ENCODE measurements at regions of chr5 and their contacts with region 1.

Region 1: DNA sequence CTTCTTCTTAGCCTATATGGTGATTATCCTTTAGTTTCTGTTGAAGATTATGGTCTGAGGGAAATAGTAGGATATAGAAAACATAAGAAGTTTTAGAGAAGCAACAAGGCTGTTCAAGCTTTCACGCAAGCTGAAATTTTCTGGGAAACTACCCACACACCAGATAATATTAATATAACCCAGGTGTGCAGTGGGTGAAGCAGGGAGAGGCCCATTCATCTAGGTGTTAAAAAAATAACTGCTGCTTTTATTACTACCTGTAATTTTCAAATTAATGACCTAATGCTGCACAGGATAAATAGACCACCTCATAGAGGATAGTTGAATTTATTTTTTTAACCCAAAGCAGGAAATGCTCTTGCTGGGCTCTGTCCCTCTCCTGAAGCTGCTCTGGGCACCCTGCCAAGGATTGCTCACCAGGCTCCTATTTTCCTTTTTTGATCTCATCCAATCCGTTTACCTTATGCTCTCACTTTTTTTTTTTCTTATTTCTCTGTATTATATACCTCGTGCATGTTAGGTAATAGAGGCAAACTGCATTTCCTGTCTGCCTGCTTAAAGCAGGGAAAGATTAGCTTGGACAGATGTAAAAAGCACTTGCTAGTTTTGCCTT is 124.3 kb upstream of the SLC12A2 start:
- DNase-seq: peak; percentile 80 to 81
- H3K4me3 ChIP-seq: no peak overlapping the region
- H3K27ac ChIP-seq: peak overlapping the region; percentile 6
- H3K4me1 ChIP-seq: peaks cover 39% of the 10 kb centered on the region
- H3K27me3 ChIP-seq: no peaks in the 10 kb centered on the region
- CTCF ChIP-seq: no peak

Region 2: GRCh38 chr5:127976991-127977717 is 17.9 kb after region 1 on chr5:
- CTCF ChIA-PET with region 1: interaction called, 11 read pairs
- POLR2A ChIA-PET with region 1: no interaction called
- intact Hi-C with region 1: no loop called
- DNase-seq: no peak
- H3K4me3 ChIP-seq: no peak overlapping the region
- H3K27ac ChIP-seq: no peak overlapping the region
- H3K4me1 ChIP-seq: no peaks in the 10 kb centered on the region
- H3K27me3 ChIP-seq: no peaks in the 10 kb centered on the region
- CTCF ChIP-seq: no peak

Measured in PC-9 (cell line).